Caco-2 (cell line): ENCODE measurements at regions of chr3 and their contacts with region 1.

Region 1: DNA sequence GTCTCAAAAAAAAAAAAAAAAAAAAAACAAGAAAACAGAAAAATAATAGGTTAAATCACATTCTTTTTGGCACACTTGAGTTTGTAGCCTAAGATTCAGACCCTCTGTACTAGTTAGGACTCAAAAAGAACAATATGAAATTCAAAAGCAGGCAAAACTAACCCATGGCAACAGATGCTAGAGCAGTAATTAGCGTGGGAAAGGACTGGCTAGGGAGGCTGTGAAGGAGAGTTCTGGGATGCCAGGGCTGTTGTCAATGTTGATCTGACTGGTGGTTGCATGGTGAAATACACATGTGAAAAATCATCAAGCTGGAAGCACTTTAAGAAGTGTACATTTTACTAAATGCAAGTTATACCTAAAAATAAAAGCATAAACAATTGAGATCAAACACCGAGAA is 35.6 kb downstream of the KLHL6 start:
- DNase-seq: no peak
- H3K4me3 ChIP-seq: no peak overlapping the region
- H3K4me3 Mint-ChIP-seq: peak overlapping the region; percentile 71
- H3K27ac Mint-ChIP-seq: peak overlapping the region; percentile 88
- H3K4me1 ChIP-seq: peaks cover 27% of the 10 kb centered on the region
- H3K4me1 Mint-ChIP-seq: peaks cover 38% of the 10 kb centered on the region
- H3K27me3 ChIP-seq: no peaks in the 10 kb centered on the region
- H3K27me3 Mint-ChIP-seq: no peaks in the 10 kb centered on the region
- CTCF ChIP-seq: no peak

Region 2: GRCh38 chr3:183502237-183503181 is 17.4 kb before region 1 on chr3:
- CTCF ChIA-PET with region 1: interaction called, 3 read pairs
- POLR2A ChIA-PET with region 1: no interaction called
- intact Hi-C with region 1: loop called (anchors 2 kb)
- DNase-seq: no peak
- H3K4me3 ChIP-seq: no peak overlapping the region
- H3K4me3 Mint-ChIP-seq: no peak overlapping the region
- H3K27ac Mint-ChIP-seq: no peak overlapping the region
- H3K4me1 ChIP-seq: no peaks in the 10 kb centered on the region
- H3K4me1 Mint-ChIP-seq: no peaks in the 10 kb centered on the region
- H3K27me3 ChIP-seq: no peaks in the 10 kb centered on the region
- H3K27me3 Mint-ChIP-seq: no peaks in the 10 kb centered on the region
- CTCF ChIP-seq: peak in 1 of 2 experiments; percentile 43

Region 3: GRCh38 chr3:183537295-183537730 is 17.4 kb after region 1 on chr3:
- CTCF ChIA-PET with region 1: no interaction called
- POLR2A ChIA-PET with region 1: no interaction called
- intact Hi-C with region 1: no loop called
- DNase-seq: no peak
- H3K4me3 ChIP-seq: no peak overlapping the region
- H3K4me3 Mint-ChIP-seq: no peak overlapping the region
- H3K27ac Mint-ChIP-seq: no peak overlapping the region
- H3K4me1 ChIP-seq: peaks cover 20% of the 10 kb centered on the region
- H3K4me1 Mint-ChIP-seq: peaks cover 17% of the 10 kb centered on the region
- H3K27me3 ChIP-seq: no peaks in the 10 kb centered on the region
- H3K27me3 Mint-ChIP-seq: no peaks in the 10 kb centered on the region
- CTCF ChIP-seq: no peak

Region 4: DNA sequence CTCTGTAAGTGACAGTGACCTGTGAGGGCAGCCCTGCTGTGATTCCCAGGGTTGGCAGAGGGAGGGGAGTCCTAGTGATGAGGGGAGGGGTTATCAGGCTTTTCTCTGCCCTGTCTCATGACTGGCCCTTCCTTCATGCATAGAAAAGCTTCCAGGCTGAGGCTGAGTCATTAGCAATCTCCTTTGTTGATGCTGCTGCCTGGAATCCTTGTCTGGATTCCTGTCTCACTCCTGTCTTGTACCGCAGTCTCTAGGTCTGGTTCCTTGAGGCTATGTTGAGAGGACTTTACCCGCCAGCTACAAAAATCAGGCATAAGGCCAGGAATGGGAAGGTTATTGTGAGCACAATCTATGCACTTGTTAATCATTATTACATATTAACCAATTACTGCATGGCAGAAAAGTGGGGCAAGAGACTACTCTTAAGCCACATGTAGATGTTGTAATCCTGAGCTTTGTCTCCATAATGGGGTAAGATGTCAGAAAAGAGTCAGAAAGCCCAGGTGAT is 28.4 kb after region 1 on chr3:
- CTCF ChIA-PET with region 1: no interaction called
- POLR2A ChIA-PET with region 1: no interaction called
- intact Hi-C with region 1: loop called (anchors 1 kb)
- DNase-seq: peak; percentile 74 to 86
- H3K4me3 ChIP-seq: no peak overlapping the region
- H3K4me3 Mint-ChIP-seq: no peak overlapping the region
- H3K27ac Mint-ChIP-seq: peak overlapping the region; percentile 56
- H3K4me1 ChIP-seq: peaks cover 25% of the 10 kb centered on the region
- H3K4me1 Mint-ChIP-seq: peaks cover 31% of the 10 kb centered on the region
- H3K27me3 ChIP-seq: no peaks in the 10 kb centered on the region
- H3K27me3 Mint-ChIP-seq: no peaks in the 10 kb centered on the region
- CTCF ChIP-seq: no peak

Region 5: DNA sequence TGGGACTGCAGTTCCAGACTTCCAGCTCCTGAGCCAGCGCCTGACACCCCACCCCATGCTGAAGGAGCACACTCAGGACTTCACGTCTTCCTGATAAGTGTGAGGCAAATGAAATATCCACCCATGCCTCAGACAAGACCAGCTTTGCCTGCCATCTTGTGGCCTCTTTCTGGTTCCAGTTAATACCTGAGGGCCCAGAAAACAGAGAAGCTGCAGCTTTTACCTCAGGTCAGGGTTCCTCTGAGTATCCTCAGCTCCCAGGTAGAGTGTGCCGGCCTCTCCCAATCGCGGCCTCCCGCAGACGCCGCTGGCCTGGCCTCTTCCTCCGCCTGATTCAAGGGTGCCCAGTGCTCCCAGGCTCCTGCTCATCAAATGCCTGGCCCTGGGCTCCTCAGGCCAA is 40.7 kb after region 1 on chr3:
- CTCF ChIA-PET with region 1: interaction called, 3 read pairs
- POLR2A ChIA-PET with region 1: no interaction called
- intact Hi-C with region 1: loop called (anchors 2 kb)
- DNase-seq: peak; percentile 51 to 58
- H3K4me3 ChIP-seq: no peak overlapping the region
- H3K4me3 Mint-ChIP-seq: no peak overlapping the region
- H3K27ac Mint-ChIP-seq: no peak overlapping the region
- H3K4me1 ChIP-seq: peaks cover 9% of the 10 kb centered on the region; the same call in 1 of the 2 replicates
- H3K4me1 Mint-ChIP-seq: peaks cover 9% of the 10 kb centered on the region
- H3K27me3 ChIP-seq: no peaks in the 10 kb centered on the region
- H3K27me3 Mint-ChIP-seq: no peaks in the 10 kb centered on the region
- CTCF ChIP-seq: peak; percentile 39 to 47

Region 6: GRCh38 chr3:183635431-183636220 is 115.7 kb after region 1 on chr3 and contains the start of gene KLHL24:
- CTCF ChIA-PET with region 1: no interaction called
- POLR2A ChIA-PET with region 1: no interaction called
- intact Hi-C with region 1: loop called (anchors 2 kb)
- DNase-seq: peak; percentile 92 to 93
- H3K4me3 ChIP-seq: peak within 1 kb of the TSS; percentile 100
- H3K4me3 Mint-ChIP-seq: peak within 1 kb of the TSS; percentile 82
- H3K27ac Mint-ChIP-seq: peak within 1 kb of the TSS; percentile 84
- H3K4me1 ChIP-seq: no peaks in the 10 kb centered on the region
- H3K4me1 Mint-ChIP-seq: no peaks in the 10 kb centered on the region
- H3K27me3 ChIP-seq: no peaks in the 10 kb centered on the region
- H3K27me3 Mint-ChIP-seq: no peaks in the 10 kb centered on the region
- CTCF ChIP-seq: no peak
- total RNA-seq, gene KLHL24: 16.8 and 17.6 TPM in 2 replicates